Left cardiac atrium (tissue), 4 donors: ENCODE measurements at regions of chr1 and their contacts with region 1.

Region 1: GRCh38 chr1:229268505-229268904 is 2.4 kb upstream of the RAB4A start:
- DNase-seq: no peak
- ATAC-seq: no peak

Region 2: DNA sequence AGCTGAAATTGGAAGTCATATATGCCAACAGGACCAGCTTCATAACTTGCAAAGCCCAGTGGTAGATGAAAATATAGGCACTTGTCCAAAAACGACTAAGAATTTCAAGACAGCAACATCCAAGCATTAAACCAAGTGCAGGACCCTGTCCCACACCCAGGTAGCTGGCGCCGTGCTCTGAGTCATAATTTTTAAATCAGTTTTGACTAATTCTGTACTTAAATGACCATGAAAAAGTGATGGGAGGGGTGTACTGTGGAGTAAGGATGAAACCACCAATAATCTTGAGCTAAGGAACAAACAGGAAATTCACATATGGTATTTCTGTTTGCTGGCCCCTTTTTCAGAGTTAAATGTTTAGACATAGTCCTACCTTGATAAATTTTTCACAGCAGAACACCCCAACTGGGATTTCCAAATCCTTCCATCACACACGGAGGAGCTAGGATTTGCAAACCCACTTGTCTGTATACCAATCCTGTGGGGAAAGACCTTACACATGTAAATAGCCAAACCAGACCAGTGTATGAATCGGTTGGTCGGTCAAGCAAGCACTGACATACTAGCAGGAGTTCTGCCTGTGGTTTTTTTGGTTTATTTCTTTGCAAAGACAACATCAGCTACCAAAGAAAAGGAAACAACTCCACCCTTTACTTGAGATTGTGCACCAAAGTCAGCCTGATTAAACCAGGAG is 233.3 kb before region 1 on chr1:
- intact Hi-C with region 1: no loop called
- DNase-seq: no peak
- ATAC-seq: no peak

Region 3: DNA sequence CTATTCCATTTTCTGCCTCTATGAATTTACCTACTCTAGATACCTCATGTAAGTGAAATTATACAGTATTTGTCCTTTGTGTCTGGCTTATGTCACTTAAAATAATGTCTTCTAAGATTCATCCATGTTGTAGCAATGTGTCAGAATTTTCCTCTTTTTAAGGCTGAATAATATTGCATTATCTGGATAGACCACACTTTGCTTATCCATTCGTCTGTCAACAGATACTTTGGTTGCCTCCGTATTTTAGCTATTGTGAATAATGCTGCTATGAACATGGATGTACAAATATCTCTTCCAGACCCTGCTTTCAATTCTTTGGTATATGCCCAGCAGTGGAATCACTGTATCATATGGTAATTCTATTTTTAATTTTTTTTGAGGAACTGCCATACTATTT is 84.5 kb after region 1 on chr1:
- intact Hi-C with region 1: loop called in 1 of 2 experiments (anchors 10 kb)
- DNase-seq: no peak
- ATAC-seq: no peak

Region 4: GRCh38 chr1:229507951-229508822 is 239.7 kb after region 1 on chr1 and contains the start of gene NUP133:
- intact Hi-C with region 1: loop called in 1 of 2 experiments (anchors 10 kb)
- DNase-seq: peak; percentile 100
- ATAC-seq: peak; percentile 99
- total RNA-seq, gene NUP133: 29.4 to 29.8 TPM